ENCODE measurements at regions of chr13 and their contacts with region 1.

Region 1: GRCh38 chr13:52128714-52129700 is at the start of gene NEK5:
- DNase-seq: peak; percentile 45 to 70 (median 64)
- H3K4me3 ChIP-seq: peak within 1 kb of the TSS; percentile 19 to 91 (median 44)
- H3K27ac ChIP-seq: no peak within 1 kb of the TSS
- H3K4me1 ChIP-seq: peaks cover 0 to 18% of the 10 kb centered on the region in 2 donors
- H3K27me3 ChIP-seq: no peaks in the 10 kb centered on the region
- CTCF ChIP-seq: peak; percentile 47 to 69 (median 62)
- POLR2A ChIP-seq: no peak
- total RNA-seq, gene NEK5: under 0.01 to 0.17 (median 0.11) TPM in 5 of 9 donors, not detected in the others

Region 2: GRCh38 chr13:51895906-51896888 is 232.8 kb before region 1 on chr13:
- intact Hi-C with region 1: loop called in 1 of 2 experiments (anchors 5 kb)
- DNase-seq: peak; percentile 40 to 80 (median 65)
- H3K4me3 ChIP-seq: no peak overlapping the region
- H3K27ac ChIP-seq: no peak overlapping the region
- H3K4me1 ChIP-seq: no peaks in the 10 kb centered on the region
- H3K27me3 ChIP-seq: no peaks in the 10 kb centered on the region
- CTCF ChIP-seq: peak; percentile 36 to 73 (median 64)
- POLR2A ChIP-seq: no peak

Region 3: DNA sequence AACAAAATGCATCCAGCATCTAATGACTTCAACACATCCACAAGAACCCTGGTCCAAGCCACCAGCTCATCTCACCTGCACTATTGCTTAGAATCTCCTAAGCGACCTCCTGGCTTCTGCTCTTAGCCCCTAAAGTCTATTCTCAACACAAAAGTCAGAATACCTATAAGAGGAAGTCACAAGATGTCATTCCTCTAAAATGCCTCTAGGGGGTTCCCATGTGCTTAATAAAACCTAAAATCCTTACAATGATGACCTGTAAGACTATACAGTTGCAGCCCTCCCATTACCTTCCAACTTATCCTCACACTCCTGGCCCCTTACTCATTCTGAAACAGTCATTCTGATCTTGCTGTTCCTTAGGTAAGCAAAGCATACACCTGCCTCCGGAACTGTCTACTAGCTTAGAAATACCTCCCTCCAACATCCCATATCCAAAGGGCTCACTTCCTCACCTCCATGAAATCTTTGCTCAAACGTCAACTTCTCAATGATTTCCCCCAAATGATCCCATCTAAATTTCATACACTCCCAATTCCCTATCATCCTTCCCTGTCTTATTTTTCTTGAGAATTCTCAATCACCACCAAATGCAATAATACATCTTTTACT is 127.8 kb before region 1 on chr13:
- intact Hi-C with region 1: loop called (anchors 5 to 10 kb)
- DNase-seq: no peak
- H3K4me3 ChIP-seq: no peak overlapping the region
- H3K27ac ChIP-seq: no peak overlapping the region
- H3K4me1 ChIP-seq: no peaks in the 10 kb centered on the region
- H3K27me3 ChIP-seq: no peaks in the 10 kb centered on the region
- CTCF ChIP-seq: peak; percentile 48 to 68 (median 62)
- POLR2A ChIP-seq: no peak

Measured in adrenal gland (tissue), 19 donors.